Endothelial cell of umbilical vein (primary cell): ENCODE measurements at regions of chr6 and their contacts with region 1.

Region 1: GRCh38 chr6:33344701-33345697 is 27.5 kb upstream of the ZBTB22 start:
- DNase-seq: peak; percentile 84
- H3K4me3 ChIP-seq: no peak overlapping the region
- H3K27ac ChIP-seq: no peak overlapping the region
- H3K4me1 ChIP-seq: no peaks in the 10 kb centered on the region
- H3K27me3 ChIP-seq: no peaks in the 10 kb centered on the region
- CTCF ChIP-seq: peak; percentile 41 to 54
- POLR2A ChIP-seq: no peak

Region 2: DNA sequence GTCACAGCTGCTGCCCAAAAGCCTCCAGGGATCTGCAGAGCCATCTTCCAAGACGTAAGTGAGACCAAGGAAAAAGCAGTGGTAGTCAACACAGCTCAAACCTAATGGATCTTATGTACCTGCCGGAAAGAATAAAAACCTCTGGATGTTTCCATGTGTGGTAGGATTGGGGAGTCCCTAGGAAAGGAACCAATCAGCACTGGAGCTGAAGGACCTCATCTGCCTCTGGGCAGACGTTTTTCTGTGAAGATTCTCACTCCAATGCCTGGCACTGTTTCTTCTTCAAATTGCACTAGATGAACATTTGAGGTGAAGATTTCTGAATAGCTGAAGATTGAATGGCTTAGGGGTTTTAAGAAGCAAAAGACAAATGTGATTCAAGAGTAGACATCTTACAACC is 581.6 kb before region 1 on chr6 and contains the start of gene HLA-DQB2:
- CTCF ChIA-PET with region 1: no interaction called
- POLR2A ChIA-PET with region 1: no interaction called
- dilution Hi-C with region 1: no loop called
- intact Hi-C with region 1: no loop called
- DNase-seq: peak; percentile 7
- H3K4me3 ChIP-seq: no peak within 1 kb of the TSS
- H3K27ac ChIP-seq: no peak within 1 kb of the TSS
- H3K4me1 ChIP-seq: no peaks in the 10 kb centered on the region
- H3K27me3 ChIP-seq: peaks cover 18 to 32% of the 10 kb centered on the region in 2 experiments
- CTCF ChIP-seq: no peak
- POLR2A ChIP-seq: no peak
- total RNA-seq, gene HLA-DQB2: not detected in 2 replicates

Region 3: GRCh38 chr6:33118525-33119123 is 226.4 kb before region 1 on chr6:
- CTCF ChIA-PET with region 1: no interaction called
- POLR2A ChIA-PET with region 1: no interaction called
- dilution Hi-C with region 1: no loop called
- intact Hi-C with region 1: loop called (anchors 1 kb)
- DNase-seq: peak; percentile 57
- H3K4me3 ChIP-seq: no peak overlapping the region
- H3K27ac ChIP-seq: no peak overlapping the region
- H3K4me1 ChIP-seq: no peaks in the 10 kb centered on the region
- H3K27me3 ChIP-seq: peaks cover 44 to 46% of the 10 kb centered on the region in 2 experiments
- CTCF ChIP-seq: peak; percentile 38 to 48
- POLR2A ChIP-seq: no peak

Region 4: DNA sequence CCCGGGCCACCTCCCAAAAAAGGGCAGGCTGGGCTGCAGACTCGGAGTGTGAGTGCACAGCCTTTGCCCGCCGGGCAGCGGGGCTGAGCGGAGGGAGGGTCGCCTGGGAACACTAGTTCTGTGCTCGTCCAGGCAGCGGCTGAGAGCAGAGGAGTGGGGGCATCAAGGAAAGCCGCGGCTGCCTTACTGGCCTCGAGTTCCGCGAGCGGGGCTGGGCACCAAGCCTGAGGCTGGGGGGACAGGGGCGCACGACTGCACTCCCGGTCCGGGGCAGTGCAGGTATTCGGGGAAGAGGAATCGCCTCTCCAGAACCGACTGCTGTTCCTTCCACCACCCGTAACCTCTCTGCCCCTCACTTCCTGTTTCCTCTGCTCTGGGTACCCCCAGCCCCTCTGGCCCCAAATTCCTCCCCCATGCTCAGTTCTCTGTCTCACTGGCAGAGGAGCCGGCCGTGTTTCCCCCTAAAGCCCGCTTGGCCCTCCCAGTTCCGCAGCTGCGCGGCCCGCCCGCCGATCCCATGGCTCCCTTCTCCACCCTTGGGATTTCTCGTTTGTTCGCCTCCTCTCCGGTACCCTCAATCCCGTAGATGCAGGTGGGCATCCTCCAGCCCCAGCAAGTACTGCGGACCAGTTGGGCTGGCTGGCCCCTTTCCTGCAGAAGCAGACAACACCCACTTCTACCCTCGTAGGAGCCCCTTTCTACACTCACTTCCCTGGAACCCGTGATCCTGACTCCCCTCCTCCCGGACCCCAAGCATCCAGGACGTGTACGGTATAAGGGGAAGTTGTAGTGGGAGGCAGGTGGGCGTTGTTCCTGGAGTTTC is 131.6 kb before region 1 on chr6:
- CTCF ChIA-PET with region 1: no interaction called
- POLR2A ChIA-PET with region 1: no interaction called
- dilution Hi-C with region 1: no loop called
- intact Hi-C with region 1: no loop called
- DNase-seq: no peak
- H3K4me3 ChIP-seq: peak overlapping the region; percentile 26 to 48 (median 30)
- H3K27ac ChIP-seq: no peak overlapping the region
- H3K4me1 ChIP-seq: peaks cover 8% of the 10 kb centered on the region
- H3K27me3 ChIP-seq: peaks cover 3 to 7% of the 10 kb centered on the region in 2 experiments
- CTCF ChIP-seq: no peak
- POLR2A ChIP-seq: peak; percentile 66

Region 5: DNA sequence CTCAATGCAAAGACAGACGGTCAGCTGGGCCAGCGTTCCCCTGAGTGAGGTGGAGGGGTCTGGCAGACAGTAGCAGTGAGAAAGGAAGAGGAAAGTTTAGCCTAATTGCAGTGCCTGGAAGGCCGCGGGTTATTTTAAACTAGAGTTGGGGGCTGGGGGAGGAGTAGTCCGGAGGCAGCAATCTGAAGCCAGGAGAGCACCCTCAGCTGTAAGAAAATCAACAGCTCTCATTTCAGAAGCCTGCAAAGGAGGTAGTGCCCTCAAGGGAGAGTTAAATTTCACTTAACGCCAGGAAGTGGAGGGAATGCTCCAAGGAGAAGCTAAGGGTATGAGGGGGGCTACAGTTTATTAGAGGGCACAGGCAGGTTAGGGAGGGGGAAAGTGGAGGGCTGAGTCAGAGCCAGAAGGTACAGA is 109.8 kb before region 1 on chr6:
- CTCF ChIA-PET with region 1: no interaction called
- POLR2A ChIA-PET with region 1: no interaction called
- dilution Hi-C with region 1: no loop called
- intact Hi-C with region 1: no loop called
- DNase-seq: no peak
- H3K4me3 ChIP-seq: no peak overlapping the region
- H3K27ac ChIP-seq: no peak overlapping the region
- H3K4me1 ChIP-seq: no peaks in the 10 kb centered on the region
- H3K27me3 ChIP-seq: peaks cover 18 to 26% of the 10 kb centered on the region in 2 experiments
- CTCF ChIP-seq: no peak
- POLR2A ChIP-seq: no peak

Region 6: DNA sequence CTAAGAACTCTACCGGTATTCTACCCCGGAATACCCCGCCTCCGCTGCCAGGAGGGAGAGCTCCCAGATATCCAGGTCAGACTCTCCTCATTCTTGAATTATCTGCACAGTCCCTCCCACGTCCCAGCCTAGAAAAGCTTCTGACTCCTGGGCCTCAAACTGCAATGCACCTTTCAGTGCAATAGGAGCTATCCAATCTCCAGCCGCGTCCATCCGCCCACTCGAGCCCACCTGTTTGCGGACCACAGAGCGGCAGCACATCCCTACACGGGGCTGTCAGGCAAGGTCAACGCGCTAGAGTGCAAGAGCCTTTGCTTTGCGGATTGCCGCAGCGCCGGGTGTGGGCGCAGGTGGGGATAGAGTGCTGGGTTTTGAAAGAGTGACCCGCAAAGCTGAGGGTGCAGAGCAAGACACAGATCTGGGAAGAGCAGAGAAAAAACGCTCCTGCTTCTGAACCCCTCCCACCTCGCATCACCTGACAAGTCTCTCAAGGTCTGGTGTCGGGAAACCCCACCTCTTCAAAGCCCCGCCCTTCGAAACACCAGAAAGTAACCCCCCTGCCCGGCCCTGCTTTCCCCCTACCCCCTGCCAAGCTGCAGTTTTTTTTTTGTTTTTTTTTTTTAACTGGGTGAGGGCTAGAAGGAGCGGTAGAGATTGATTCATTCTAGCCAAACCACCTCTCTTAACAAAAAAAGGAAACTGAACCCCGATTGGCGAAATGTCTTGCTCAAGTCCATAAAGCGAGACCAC is 32.4 kb before region 1 on chr6:
- CTCF ChIA-PET with region 1: interaction called, 6 read pairs
- POLR2A ChIA-PET with region 1: no interaction called
- dilution Hi-C with region 1: no loop called
- intact Hi-C with region 1: loop called (anchors 1 kb)
- DNase-seq: peak; percentile 39
- H3K4me3 ChIP-seq: peak overlapping the region; percentile 37 to 96 (median 65)
- H3K27ac ChIP-seq: no peak overlapping the region
- H3K4me1 ChIP-seq: peaks cover 16% of the 10 kb centered on the region
- H3K27me3 ChIP-seq: no peaks in the 10 kb centered on the region
- CTCF ChIP-seq: no peak
- POLR2A ChIP-seq: no peak

Region 7: GRCh38 chr6:33359331-33359730 is 14.3 kb after region 1 on chr6:
- CTCF ChIA-PET with region 1: interaction called, 20 read pairs
- POLR2A ChIA-PET with region 1: no interaction called
- dilution Hi-C with region 1: no loop called
- intact Hi-C with region 1: no loop called
- DNase-seq: no peak
- H3K4me3 ChIP-seq: no peak overlapping the region
- H3K27ac ChIP-seq: no peak overlapping the region
- H3K4me1 ChIP-seq: no peaks in the 10 kb centered on the region
- H3K27me3 ChIP-seq: peaks cover 18 to 19% of the 10 kb centered on the region in 2 experiments
- CTCF ChIP-seq: no peak
- POLR2A ChIP-seq: no peak